Activated CD4-positive, alpha-beta memory T cell treated with anti-CD3 and anti-CD28 coated beads for 36 hours (primary cell): ENCODE measurements at regions of chr18 and their contacts with region 1.

Region 1: DNA sequence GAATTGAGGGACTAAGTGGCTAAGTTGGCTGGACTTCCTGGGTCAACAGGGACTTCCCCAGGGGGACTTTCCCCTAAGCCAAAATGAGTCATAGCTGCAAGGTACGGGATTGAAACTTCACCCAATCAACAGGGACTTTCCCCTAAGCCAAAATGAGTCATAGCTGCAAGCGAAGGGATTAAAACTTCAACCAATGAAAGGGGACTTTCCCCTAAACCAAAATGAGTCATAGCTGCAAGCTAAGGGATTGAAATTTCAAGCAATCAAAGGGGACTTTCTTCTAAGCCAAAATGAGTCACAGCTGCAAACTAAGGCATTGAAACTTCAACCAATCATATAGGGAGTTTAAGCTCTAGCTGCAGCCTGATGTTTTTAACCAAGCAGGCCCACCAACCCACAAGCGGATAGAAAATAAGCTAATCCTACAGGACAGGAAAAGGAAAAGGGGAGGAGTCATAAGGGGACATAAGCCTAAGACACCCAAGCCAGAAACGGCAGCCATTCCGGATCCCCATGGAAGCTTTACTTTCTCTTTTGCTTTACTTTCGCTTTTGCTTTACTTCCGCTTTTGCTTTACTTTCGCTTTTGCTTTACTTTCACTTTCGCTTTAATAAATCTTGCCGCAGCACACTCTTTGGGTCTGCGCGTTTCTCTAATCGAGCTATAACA is 1375.4 kb upstream of the CELF4 start:
- DNase-seq: peak; percentile 70
- H3K4me3 Mint-ChIP-seq: peak overlapping the region; percentile 69
- H3K27ac Mint-ChIP-seq: peak overlapping the region; percentile 97
- H3K4me1 Mint-ChIP-seq: peaks cover 30% of the 10 kb centered on the region
- H3K27me3 Mint-ChIP-seq: peaks cover 3% of the 10 kb centered on the region

Region 2: GRCh38 chr18:38575648-38576047 is 365.3 kb before region 1 on chr18:
- CTCF ChIA-PET with region 1: no interaction called
- POLR2A ChIA-PET with region 1: no interaction called
- intact Hi-C with region 1: loop called (anchors 2 kb)
- DNase-seq: peak; percentile 13
- H3K4me3 Mint-ChIP-seq: peak overlapping the region; percentile 45
- H3K27ac Mint-ChIP-seq: peak overlapping the region; percentile 75
- H3K4me1 Mint-ChIP-seq: peaks cover 19% of the 10 kb centered on the region
- H3K27me3 Mint-ChIP-seq: no peaks in the 10 kb centered on the region

Region 3: GRCh38 chr18:38654946-38655345 is 286.1 kb before region 1 on chr18:
- CTCF ChIA-PET with region 1: no interaction called
- POLR2A ChIA-PET with region 1: no interaction called
- intact Hi-C with region 1: no loop called
- DNase-seq: no peak
- H3K4me3 Mint-ChIP-seq: no peak overlapping the region
- H3K27ac Mint-ChIP-seq: no peak overlapping the region
- H3K4me1 Mint-ChIP-seq: no peaks in the 10 kb centered on the region
- H3K27me3 Mint-ChIP-seq: no peaks in the 10 kb centered on the region

Region 4: DNA sequence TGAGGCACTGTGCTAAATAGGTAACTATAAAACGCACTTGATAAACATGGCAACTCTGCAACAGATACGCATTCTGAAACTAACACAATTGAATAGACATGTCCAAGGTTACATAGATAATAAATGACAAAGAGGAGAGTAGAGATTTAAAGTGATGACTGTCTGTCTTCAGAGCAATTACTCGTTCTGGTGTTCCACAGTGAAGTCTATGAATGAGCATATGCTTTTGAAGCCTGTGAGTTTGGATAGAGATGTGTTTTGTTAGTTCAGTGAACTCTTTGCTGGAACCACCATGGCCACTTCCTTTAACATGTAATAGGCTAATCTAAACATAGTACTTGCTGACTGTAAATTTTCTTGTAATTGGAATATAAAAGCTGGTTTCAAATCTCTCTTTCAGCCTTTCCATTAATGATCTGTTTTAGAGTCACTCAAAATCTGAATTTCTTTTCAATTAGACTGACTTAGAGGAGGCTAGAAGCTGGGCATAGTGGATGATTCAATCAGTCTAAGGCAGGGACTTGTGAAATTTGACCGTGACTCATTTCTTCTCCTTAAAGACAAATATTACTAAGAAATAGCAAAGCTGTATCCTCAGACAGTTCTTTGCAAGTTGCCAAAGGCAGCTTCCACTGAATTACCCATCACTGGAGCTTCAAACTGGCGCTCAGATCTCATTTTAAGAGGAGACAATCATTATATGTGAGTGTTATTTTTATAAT is 245.3 kb before region 1 on chr18:
- CTCF ChIA-PET with region 1: no interaction called
- POLR2A ChIA-PET with region 1: no interaction called
- intact Hi-C with region 1: loop called (anchors 10 kb)
- DNase-seq: no peak
- H3K4me3 Mint-ChIP-seq: no peak overlapping the region
- H3K27ac Mint-ChIP-seq: no peak overlapping the region
- H3K4me1 Mint-ChIP-seq: no peaks in the 10 kb centered on the region
- H3K27me3 Mint-ChIP-seq: no peaks in the 10 kb centered on the region

Region 5: GRCh38 chr18:38759457-38759856 is 181.5 kb before region 1 on chr18:
- CTCF ChIA-PET with region 1: no interaction called
- POLR2A ChIA-PET with region 1: no interaction called
- intact Hi-C with region 1: no loop called
- DNase-seq: no peak
- H3K4me3 Mint-ChIP-seq: no peak overlapping the region
- H3K27ac Mint-ChIP-seq: no peak overlapping the region
- H3K4me1 Mint-ChIP-seq: no peaks in the 10 kb centered on the region
- H3K27me3 Mint-ChIP-seq: no peaks in the 10 kb centered on the region

Region 6: GRCh38 chr18:38981389-38981788 is 40.4 kb after region 1 on chr18:
- CTCF ChIA-PET with region 1: no interaction called
- POLR2A ChIA-PET with region 1: no interaction called
- intact Hi-C with region 1: no loop called
- DNase-seq: no peak
- H3K4me3 Mint-ChIP-seq: no peak overlapping the region
- H3K27ac Mint-ChIP-seq: no peak overlapping the region
- H3K4me1 Mint-ChIP-seq: no peaks in the 10 kb centered on the region
- H3K27me3 Mint-ChIP-seq: no peaks in the 10 kb centered on the region